Heart right ventricle (tissue), 16 donors: ENCODE measurements at regions of chr5 and their contacts with region 1.

Region 1: GRCh38 chr5:134527146-134527960 is 1.9 kb downstream of the JADE2 start:
- DNase-seq: peak; percentile 88 to 89
- ATAC-seq: peak; percentile 54 to 79 (median 68)
- H3K4me3 ChIP-seq: peak overlapping the region; percentile 66 to 99 (median 90)
- H3K27ac ChIP-seq: peak overlapping the region; percentile 96 to 100 (median 98)
- H3K4me1 ChIP-seq: peaks cover 25 to 57% (median 48%) of the 10 kb centered on the region in 9 donors
- H3K27me3 ChIP-seq: no peaks in the 10 kb centered on the region
- CTCF ChIP-seq: peak; percentile 72 to 87 (median 80)

Region 2: DNA sequence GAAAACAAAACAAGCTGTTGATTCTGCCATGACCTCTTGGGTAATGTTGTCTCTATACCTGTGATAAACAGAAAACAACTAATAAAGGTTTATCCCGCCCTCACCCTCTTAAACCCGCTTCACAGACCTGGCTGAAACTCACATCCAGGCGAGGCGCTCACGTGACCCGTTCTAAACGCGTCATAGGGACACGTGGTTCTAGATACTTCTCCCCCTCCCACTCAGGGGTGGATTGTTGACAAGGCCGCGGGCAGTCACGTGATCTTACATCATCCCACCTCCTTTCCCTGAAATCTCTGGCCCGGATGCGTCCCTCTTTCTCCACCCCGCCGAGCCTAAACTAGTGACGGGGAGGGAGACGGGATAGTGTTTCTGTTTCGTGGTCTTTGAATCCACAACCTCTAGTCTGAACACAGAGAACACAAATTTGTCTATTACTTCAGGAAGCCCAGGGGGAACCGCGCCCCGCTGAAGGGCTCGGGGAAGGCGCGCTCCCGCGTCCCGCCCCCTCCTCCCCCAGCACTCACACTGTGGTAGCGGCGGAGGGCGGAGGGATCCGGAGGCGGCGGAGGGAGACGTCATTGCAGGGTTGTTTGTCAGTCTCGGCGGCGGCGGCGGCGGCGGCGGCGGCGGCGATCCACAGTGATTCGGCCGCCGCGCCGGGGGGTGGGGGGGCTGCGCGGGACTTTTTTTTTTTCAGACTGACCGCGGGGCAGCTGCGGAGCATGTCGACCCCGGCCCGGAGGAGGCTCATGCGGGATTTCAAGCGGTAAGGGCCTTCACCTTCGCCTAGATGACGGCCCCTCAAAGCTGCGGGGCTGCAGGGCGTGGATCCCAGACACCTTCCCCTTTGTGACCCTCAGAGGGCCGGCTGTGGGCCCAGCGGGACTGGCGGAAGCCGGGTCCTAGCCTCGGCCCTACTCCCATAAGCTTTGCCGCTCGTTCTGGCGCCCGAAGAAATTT is 156.2 kb before region 1 on chr5 and contains the start of gene UBE2B:
- intact Hi-C with region 1: loop called in 7 of 10 experiments (anchors 1 to 5 kb)
- DNase-seq: peak; percentile 95 to 99
- ATAC-seq: peak; percentile 91 to 97 (median 95)
- H3K4me3 ChIP-seq: peak within 1 kb of the TSS; percentile 64 to 97 (median 84)
- H3K27ac ChIP-seq: peak within 1 kb of the TSS; percentile 90 to 100 (median 98)
- H3K4me1 ChIP-seq: peaks cover 0 to 64% (median 51%) of the 10 kb centered on the region in 9 donors
- H3K27me3 ChIP-seq: no peaks in the 10 kb centered on the region
- CTCF ChIP-seq: no peak
- total RNA-seq, gene UBE2B: 195 to 260 (median 227) TPM

Region 3: GRCh38 chr5:134383980-134384697 is 143.2 kb before region 1 on chr5:
- intact Hi-C with region 1: no loop called
- DNase-seq: no peak
- ATAC-seq: no peak
- H3K4me3 ChIP-seq: no peak overlapping the region
- H3K27ac ChIP-seq: no peak overlapping the region
- H3K4me1 ChIP-seq: peaks cover 0 to 7% (median 0%) of the 10 kb centered on the region in 9 donors
- H3K27me3 ChIP-seq: no peaks in the 10 kb centered on the region
- CTCF ChIP-seq: no peak

Region 4: DNA sequence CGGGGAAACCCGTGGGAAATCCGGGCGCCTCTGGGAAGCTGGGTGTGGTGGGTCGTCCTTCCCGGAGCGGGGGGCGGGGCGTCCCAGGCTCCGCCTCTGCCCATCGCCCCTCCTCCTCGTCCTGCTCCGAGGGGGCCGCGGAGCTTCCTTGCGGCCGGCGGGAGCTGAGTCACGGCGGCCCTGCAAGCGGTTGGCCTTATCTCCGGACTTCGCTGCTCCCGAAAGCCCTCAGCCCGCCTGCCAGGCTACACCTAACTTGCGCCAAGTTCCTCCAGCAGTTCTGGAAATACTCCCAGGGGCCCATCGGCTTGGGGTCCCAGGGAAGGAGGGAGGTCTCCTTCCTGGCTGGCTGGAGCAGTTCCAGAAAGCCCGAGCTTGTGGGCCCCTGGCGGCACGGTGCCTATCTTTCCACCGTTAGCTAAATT is 61.5 kb before region 1 on chr5:
- intact Hi-C with region 1: loop called in 7 of 10 experiments (anchors 1 to 10 kb)
- DNase-seq: peak; percentile 87 to 93
- ATAC-seq: peak; percentile 87 to 96 (median 92)
- H3K4me3 ChIP-seq: peak overlapping the region in 9 of 10 donors; percentile 45 to 70 (median 53)
- H3K27ac ChIP-seq: peak overlapping the region; percentile 90 to 99 (median 97)
- H3K4me1 ChIP-seq: peaks cover 12 to 39% (median 35%) of the 10 kb centered on the region in 9 donors
- H3K27me3 ChIP-seq: no peaks in the 10 kb centered on the region
- CTCF ChIP-seq: no peak

Region 5: GRCh38 chr5:134547579-134547978 is 20.2 kb after region 1 on chr5:
- intact Hi-C with region 1: loop called in 3 of 10 experiments (anchors 2 kb)
- DNase-seq: no peak
- ATAC-seq: peak in 2 of 8 donors; percentile 38 to 50
- H3K4me3 ChIP-seq: no peak overlapping the region
- H3K27ac ChIP-seq: peak overlapping the region in 5 of 10 donors; percentile 24 to 44 (median 36)
- H3K4me1 ChIP-seq: peaks cover 17 to 98% (median 84%) of the 10 kb centered on the region in 9 donors
- H3K27me3 ChIP-seq: no peaks in the 10 kb centered on the region
- CTCF ChIP-seq: no peak

Region 6: GRCh38 chr5:134577796-134578363 is 50.5 kb after region 1 on chr5:
- intact Hi-C with region 1: loop called in 7 of 10 experiments (anchors 2 to 10 kb)
- DNase-seq: peak; percentile 74 to 85
- ATAC-seq: peak in 7 of 8 donors; percentile 36 to 65 (median 52)
- H3K4me3 ChIP-seq: no peak overlapping the region
- H3K27ac ChIP-seq: peak overlapping the region in 2 of 10 donors; percentile 41 to 48
- H3K4me1 ChIP-seq: peaks cover 16 to 63% (median 42%) of the 10 kb centered on the region in 9 donors
- H3K27me3 ChIP-seq: no peaks in the 10 kb centered on the region
- CTCF ChIP-seq: peak; percentile 65 to 91 (median 86)